Dendritic cell treated with granulocyte-macrophage colony-stimulating factor and Interleukin-4, amounts not matched to agents 40 ng/mL and 50 ng/mL, for 4 days (primary cell): ENCODE measurements at regions of chr12 and their contacts with region 1.

Region 1: GRCh38 chr12:64181504-64182291 is 40.4 kb downstream of the KICS2 start:
- H3K4me3 Mint-ChIP-seq: no peak overlapping the region
- H3K27ac Mint-ChIP-seq: no peak overlapping the region
- H3K4me1 Mint-ChIP-seq: peaks cover 25% of the 10 kb centered on the region
- H3K27me3 Mint-ChIP-seq: peaks cover 4% of the 10 kb centered on the region

Region 2: DNA sequence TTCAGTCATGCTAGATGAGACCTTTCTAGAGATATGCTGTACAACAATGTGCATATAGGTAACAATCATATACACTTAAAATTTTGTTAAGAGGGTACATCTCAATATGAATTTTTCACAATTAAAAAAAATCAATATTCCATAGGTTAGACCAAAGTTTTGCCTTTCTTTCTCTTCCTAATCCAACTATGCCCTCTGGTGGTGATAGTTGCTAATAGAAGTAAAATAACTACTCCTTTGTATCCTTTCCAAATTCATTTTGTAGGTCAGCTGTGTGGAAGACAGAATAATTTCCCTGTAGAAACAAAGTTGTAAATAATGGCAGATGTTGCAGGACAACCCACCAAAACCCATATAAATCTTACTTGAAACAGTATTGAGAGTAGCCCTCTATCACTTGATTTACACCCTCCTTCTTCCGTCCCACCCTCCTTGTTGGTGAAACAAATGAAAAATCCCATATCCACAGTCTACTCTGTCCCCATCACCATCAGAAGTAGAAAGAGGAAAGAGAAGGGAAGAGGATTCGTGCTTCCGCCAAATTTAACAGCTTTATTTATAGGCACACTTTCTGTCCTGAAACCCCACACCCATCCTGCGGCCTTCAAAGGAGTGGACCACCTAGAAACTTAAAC is 74.6 kb after region 1 on chr12:
- intact Hi-C with region 1: loop called (anchors 2 kb)
- H3K4me3 Mint-ChIP-seq: no peak overlapping the region
- H3K27ac Mint-ChIP-seq: no peak overlapping the region
- H3K4me1 Mint-ChIP-seq: peaks cover 8% of the 10 kb centered on the region
- H3K27me3 Mint-ChIP-seq: no peaks in the 10 kb centered on the region